ENCODE measurements at regions of chr5 and their contacts with region 1.

Region 1: DNA sequence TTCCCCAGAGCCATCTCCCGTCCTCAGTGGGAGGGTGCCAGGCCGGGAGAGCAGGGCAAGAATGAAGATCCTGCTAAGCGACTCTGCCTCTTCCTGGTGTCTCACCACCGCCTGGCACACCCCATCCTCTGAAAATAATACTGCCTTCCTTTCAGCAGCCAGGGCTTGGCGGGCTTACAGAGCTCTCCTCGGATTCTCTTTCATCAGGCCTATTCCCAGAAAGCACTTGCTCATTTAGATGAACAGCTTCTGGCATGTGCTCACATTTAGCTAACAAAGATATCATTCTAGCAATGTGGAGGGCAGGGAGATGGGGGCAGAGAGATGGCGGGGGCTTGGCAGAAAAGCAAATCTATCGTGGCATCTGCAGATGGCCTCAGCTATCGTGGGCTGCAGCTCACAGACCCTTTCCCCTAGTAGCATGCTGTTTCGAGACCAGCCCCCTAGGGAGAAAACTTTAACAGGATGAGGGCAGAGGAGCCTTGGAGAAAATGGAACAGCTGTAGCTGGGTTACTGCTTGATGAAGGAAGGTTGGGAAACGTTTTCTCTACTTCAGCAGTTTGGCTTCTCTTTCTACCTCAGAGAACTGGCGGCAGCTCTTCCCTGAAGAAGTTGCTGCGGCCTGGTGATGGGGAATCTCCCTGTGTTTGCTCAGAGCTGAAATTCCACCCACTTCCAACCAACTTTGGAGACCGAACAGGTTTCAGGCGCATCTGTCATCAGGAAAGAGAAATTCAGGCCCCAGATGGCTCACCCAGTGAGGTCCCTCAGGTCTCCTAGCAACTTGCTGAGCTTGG is 102.1 kb downstream of the TMEM174 start:
- DNase-seq: peak in 1 of 5 donors; percentile 27
- H3K4me3 ChIP-seq: no peak overlapping the region
- H3K27ac ChIP-seq: no peak overlapping the region
- H3K4me1 ChIP-seq: no peaks in the 10 kb centered on the region
- H3K27me3 ChIP-seq: no peaks in the 10 kb centered on the region
- CTCF ChIP-seq: no peak
- EP300 ChIP-seq: no peak
- POLR2A ChIP-seq: no peak

Region 2: GRCh38 chr5:72518001-72518683 is 756.9 kb before region 1 on chr5:
- intact Hi-C with region 1: loop called in 1 of 4 experiments (anchors 5 kb)
- DNase-seq: no peak
- H3K4me3 ChIP-seq: no peak overlapping the region
- H3K27ac ChIP-seq: no peak overlapping the region
- H3K4me1 ChIP-seq: no peaks in the 10 kb centered on the region
- H3K27me3 ChIP-seq: no peaks in the 10 kb centered on the region
- CTCF ChIP-seq: no peak
- EP300 ChIP-seq: no peak
- POLR2A ChIP-seq: no peak

Measured in ovary (tissue), 10 donors.